WTC11 (cell line): ENCODE measurements at regions of chr22 and their contacts with region 1.

Region 1: GRCh38 chr22:32775957-32776356 is 25.5 kb upstream of the TIMP3 start:
- DNase-seq: no peak
- ATAC-seq: peak; percentile 77
- H3K4me3 Mint-ChIP-seq: no peak overlapping the region
- H3K27ac Mint-ChIP-seq: no peak overlapping the region
- H3K4me1 Mint-ChIP-seq: peaks cover 13% of the 10 kb centered on the region
- H3K27me3 Mint-ChIP-seq: peaks cover 5% of the 10 kb centered on the region; the same call in 1 of the 2 replicates
- CTCF ChIP-seq: no peak

Region 2: GRCh38 chr22:32745251-32745995 is 30.5 kb before region 1 on chr22:
- CTCF ChIA-PET with region 1: interaction called, 10 read pairs
- POLR2A ChIA-PET with region 1: no interaction called
- DNase-seq: peak; percentile 26
- ATAC-seq: peak; percentile 81
- H3K4me3 Mint-ChIP-seq: no peak overlapping the region
- H3K27ac Mint-ChIP-seq: 0 out of 2 replicates have a peak overlapping the region, but pooled peaks have one; percentile 5
- H3K4me1 Mint-ChIP-seq: peaks cover 17% of the 10 kb centered on the region
- H3K27me3 Mint-ChIP-seq: no peaks in the 10 kb centered on the region; the same call in 1 of the 2 replicates
- CTCF ChIP-seq: no peak

Region 3: GRCh38 chr22:32836280-32837123 is 60.5 kb after region 1 on chr22:
- CTCF ChIA-PET with region 1: no interaction called
- POLR2A ChIA-PET with region 1: no interaction called
- DNase-seq: no peak
- ATAC-seq: no peak
- H3K4me3 Mint-ChIP-seq: no peak overlapping the region
- H3K27ac Mint-ChIP-seq: no peak overlapping the region
- H3K4me1 Mint-ChIP-seq: peaks cover 7% of the 10 kb centered on the region
- H3K27me3 Mint-ChIP-seq: no peaks in the 10 kb centered on the region; the same call in 1 of the 2 replicates
- CTCF ChIP-seq: no peak

Region 4: GRCh38 chr22:33105501-33105911 is 329.5 kb after region 1 on chr22:
- CTCF ChIA-PET with region 1: no interaction called
- POLR2A ChIA-PET with region 1: no interaction called
- DNase-seq: no peak
- ATAC-seq: no peak
- H3K4me3 Mint-ChIP-seq: no peak overlapping the region
- H3K27ac Mint-ChIP-seq: no peak overlapping the region
- H3K4me1 Mint-ChIP-seq: peaks cover 11% of the 10 kb centered on the region
- H3K27me3 Mint-ChIP-seq: peaks cover 22% of the 10 kb centered on the region
- CTCF ChIP-seq: no peak